HEK293 (cell line): ENCODE measurements at regions of chr10 and their contacts with region 1.

Region 1: GRCh38 chr10:116787893-116788665 is 45.7 kb upstream of the HSPA12A start:
- H3K4me3 ChIP-seq: no peak overlapping the region
- H3K27ac ChIP-seq: no peak overlapping the region
- H3K4me1 ChIP-seq: no peaks in the 10 kb centered on the region
- CTCF ChIP-seq: peak; percentile 93

Region 2: GRCh38 chr10:116627386-116627933 is 160.6 kb before region 1 on chr10:
- CTCF ChIA-PET with region 1: interaction called, 60 read pairs
- POLR2A ChIA-PET with region 1: no interaction called
- H3K4me3 ChIP-seq: peak overlapping the region; percentile 39
- H3K27ac ChIP-seq: no peak overlapping the region
- H3K4me1 ChIP-seq: no peaks in the 10 kb centered on the region
- CTCF ChIP-seq: 0 out of 2 replicates have a peak, but pooled peaks have one; percentile 22

Region 3: GRCh38 chr10:116683821-116684220 is 104.3 kb before region 1 on chr10:
- CTCF ChIA-PET with region 1: interaction called, 109 read pairs
- POLR2A ChIA-PET with region 1: no interaction called
- H3K4me3 ChIP-seq: no peak overlapping the region
- H3K27ac ChIP-seq: no peak overlapping the region
- H3K4me1 ChIP-seq: no peaks in the 10 kb centered on the region
- CTCF ChIP-seq: no peak

Region 4: DNA sequence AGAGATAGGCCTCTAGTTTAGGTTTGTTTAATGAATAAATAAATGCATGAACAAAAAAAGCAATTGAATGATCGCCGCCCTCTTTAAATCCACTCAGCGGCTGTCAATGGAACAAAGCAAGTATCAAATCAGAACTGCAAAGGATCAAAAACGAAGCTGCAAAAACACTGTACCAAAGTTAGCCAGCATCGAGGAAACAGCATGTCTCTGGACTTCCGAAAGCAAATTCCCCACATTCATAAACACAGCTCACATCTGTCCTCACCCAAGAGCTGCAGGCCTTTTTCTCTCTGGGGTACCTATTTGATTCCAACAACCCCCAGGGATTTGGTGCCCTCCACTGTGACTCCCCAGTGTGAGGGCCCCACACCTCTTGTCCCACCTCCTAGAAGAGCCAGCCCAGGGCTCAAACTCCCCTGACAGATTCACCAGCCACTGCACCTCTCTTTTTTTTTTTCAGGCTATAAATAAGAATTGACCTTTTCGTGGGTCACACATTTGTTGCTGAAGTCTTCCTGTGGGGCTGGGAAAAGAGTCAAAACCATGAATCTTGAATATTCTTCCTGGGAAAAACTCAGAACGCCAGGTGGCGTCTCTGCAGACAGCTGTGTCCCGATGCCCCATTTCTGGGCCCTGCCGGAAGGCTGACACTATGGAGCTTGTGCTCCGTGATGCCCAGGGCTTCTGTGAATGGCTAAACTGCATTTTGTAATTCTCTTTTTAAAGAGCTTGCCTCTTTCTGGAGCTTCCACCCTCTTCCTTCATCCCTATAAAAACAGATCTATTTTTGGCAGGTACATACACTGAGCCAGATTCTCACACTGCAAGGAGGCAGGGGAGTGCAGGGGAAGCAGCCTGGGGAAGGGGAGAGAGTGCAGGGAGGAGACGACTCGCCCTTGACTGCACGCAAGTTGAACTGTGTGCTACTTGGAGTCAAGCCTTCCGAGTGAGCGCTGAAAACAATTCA is 97.4 kb before region 1 on chr10:
- CTCF ChIA-PET with region 1: interaction called, 27 read pairs
- POLR2A ChIA-PET with region 1: no interaction called
- H3K4me3 ChIP-seq: no peak overlapping the region
- H3K27ac ChIP-seq: no peak overlapping the region
- H3K4me1 ChIP-seq: no peaks in the 10 kb centered on the region
- CTCF ChIP-seq: no peak

Region 5: GRCh38 chr10:116699471-116700150 is 88.5 kb before region 1 on chr10:
- CTCF ChIA-PET with region 1: interaction called, 12 read pairs
- POLR2A ChIA-PET with region 1: no interaction called
- H3K4me3 ChIP-seq: no peak overlapping the region
- H3K27ac ChIP-seq: no peak overlapping the region
- H3K4me1 ChIP-seq: no peaks in the 10 kb centered on the region
- CTCF ChIP-seq: no peak

Region 6: DNA sequence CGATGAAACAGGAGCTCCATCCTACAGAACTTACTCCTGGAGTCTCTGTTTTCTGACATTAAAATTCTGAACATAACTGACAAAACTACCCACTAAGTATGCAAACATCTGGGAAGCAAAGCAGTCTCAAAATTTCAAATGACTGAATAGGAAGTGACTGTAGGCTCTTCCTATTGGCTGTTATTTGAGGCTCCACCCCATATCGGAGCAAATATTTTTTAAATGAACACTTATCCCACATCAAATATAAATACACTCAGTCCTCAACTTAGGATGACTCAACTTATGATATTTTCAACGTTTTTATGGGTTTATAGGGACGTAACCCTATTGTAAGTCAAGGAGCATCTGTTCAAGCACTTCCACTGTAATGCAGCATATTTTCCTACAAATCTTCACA is 54.5 kb before region 1 on chr10:
- CTCF ChIA-PET with region 1: no interaction called
- POLR2A ChIA-PET with region 1: no interaction called
- H3K4me3 ChIP-seq: no peak overlapping the region
- H3K27ac ChIP-seq: no peak overlapping the region
- H3K4me1 ChIP-seq: no peaks in the 10 kb centered on the region
- CTCF ChIP-seq: no peak

Region 7: GRCh38 chr10:116771101-116771958 is 16.7 kb before region 1 on chr10:
- CTCF ChIA-PET with region 1: interaction called, 16 read pairs
- POLR2A ChIA-PET with region 1: no interaction called
- H3K4me3 ChIP-seq: no peak overlapping the region
- H3K27ac ChIP-seq: no peak overlapping the region
- H3K4me1 ChIP-seq: no peaks in the 10 kb centered on the region
- CTCF ChIP-seq: no peak

Region 8: GRCh38 chr10:117653170-117653515 is 865.1 kb after region 1 on chr10:
- CTCF ChIA-PET with region 1: no interaction called
- POLR2A ChIA-PET with region 1: no interaction called
- H3K4me3 ChIP-seq: no peak overlapping the region
- H3K27ac ChIP-seq: no peak overlapping the region
- H3K4me1 ChIP-seq: no peaks in the 10 kb centered on the region
- CTCF ChIP-seq: no peak